PC-3 (cell line): ENCODE measurements at regions of chr5 and their contacts with region 1.

Region 1: GRCh38 chr5:149990518-149991376 is 9.7 kb downstream of the TIGD6 start:
- DNase-seq: peak; percentile 95
- ATAC-seq: peak; percentile 95
- H3K4me3 ChIP-seq: no peak overlapping the region
- H3K27ac ChIP-seq: no peak overlapping the region
- H3K4me1 ChIP-seq: no peaks in the 10 kb centered on the region
- H3K27me3 ChIP-seq: no peaks in the 10 kb centered on the region
- CTCF ChIP-seq: peak; percentile 98

Region 2: GRCh38 chr5:149636851-149637246 is 353.9 kb before region 1 on chr5:
- CTCF ChIA-PET with region 1: no interaction called
- POLR2A ChIA-PET with region 1: no interaction called
- intact Hi-C with region 1: loop called (anchors 5 kb)
- DNase-seq: peak; percentile 98
- ATAC-seq: peak; percentile 85
- H3K4me3 ChIP-seq: no peak overlapping the region
- H3K27ac ChIP-seq: no peak overlapping the region
- H3K4me1 ChIP-seq: peaks cover 26% of the 10 kb centered on the region
- H3K27me3 ChIP-seq: no peaks in the 10 kb centered on the region
- CTCF ChIP-seq: peak; percentile 100

Region 3: GRCh38 chr5:149765932-149766331 is 224.8 kb before region 1 on chr5:
- CTCF ChIA-PET with region 1: no interaction called
- POLR2A ChIA-PET with region 1: no interaction called
- intact Hi-C with region 1: no loop called
- DNase-seq: peak; percentile 67
- ATAC-seq: no peak
- H3K4me3 ChIP-seq: no peak overlapping the region
- H3K27ac ChIP-seq: no peak overlapping the region
- H3K4me1 ChIP-seq: no peaks in the 10 kb centered on the region
- H3K27me3 ChIP-seq: no peaks in the 10 kb centered on the region
- CTCF ChIP-seq: peak; percentile 89

Region 4: GRCh38 chr5:149852641-149853330 is 138.0 kb before region 1 on chr5:
- CTCF ChIA-PET with region 1: interaction called, 10 read pairs
- POLR2A ChIA-PET with region 1: no interaction called
- intact Hi-C with region 1: loop called (anchors 1 kb)
- DNase-seq: peak; percentile 87
- ATAC-seq: peak; percentile 93
- H3K4me3 ChIP-seq: no peak overlapping the region
- H3K27ac ChIP-seq: no peak overlapping the region
- H3K4me1 ChIP-seq: peaks cover 7% of the 10 kb centered on the region; the same call in 1 of the 2 replicates
- H3K27me3 ChIP-seq: no peaks in the 10 kb centered on the region
- CTCF ChIP-seq: peak; percentile 99

Region 5: DNA sequence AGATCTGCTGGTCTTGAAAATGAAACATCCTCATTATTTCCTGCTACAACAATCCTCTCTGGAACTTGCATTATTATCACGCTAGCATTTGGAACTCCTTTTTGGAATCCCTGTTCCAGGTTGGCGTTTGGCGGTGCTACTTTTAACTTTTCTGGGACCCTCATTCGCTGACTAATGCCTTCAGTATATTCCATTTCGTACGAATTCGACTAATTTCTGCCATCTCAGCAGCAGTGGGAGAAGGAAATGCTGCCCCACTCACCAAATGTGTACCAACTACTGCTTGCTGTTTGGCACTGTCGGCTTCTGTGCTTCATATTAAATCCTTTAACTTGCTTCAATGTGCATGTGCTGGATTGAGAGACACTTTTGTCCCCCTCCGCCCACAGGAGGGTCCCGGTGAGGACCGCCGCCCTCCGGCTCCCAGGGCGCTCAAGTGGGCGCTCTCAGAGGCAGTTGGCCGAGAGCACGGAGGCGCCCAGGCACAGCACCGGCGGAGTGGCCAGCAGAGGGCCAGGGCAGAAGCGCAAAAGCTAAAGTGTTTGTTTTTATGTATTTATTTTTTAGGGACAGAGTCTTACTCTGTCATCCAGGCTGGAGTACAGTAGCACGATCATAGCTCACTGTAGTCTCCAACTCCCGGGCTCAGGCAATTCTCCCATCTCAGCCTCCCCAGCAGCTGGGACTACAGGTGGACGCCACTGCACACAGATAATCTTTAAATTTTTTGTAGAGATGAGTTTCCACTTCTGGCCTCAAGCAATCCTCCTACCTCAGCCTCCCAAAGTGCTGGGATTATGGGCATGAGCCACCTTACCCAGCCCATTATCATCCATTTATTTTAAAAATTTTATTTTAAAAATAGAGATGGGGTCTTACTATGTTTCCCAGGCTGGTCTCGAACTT is 58.0 kb before region 1 on chr5:
- CTCF ChIA-PET with region 1: interaction called, 4 read pairs
- POLR2A ChIA-PET with region 1: no interaction called
- intact Hi-C with region 1: loop called (anchors 1 kb)
- DNase-seq: peak; percentile 80
- ATAC-seq: peak; percentile 84
- H3K4me3 ChIP-seq: peak overlapping the region; percentile 71
- H3K27ac ChIP-seq: no peak overlapping the region
- H3K4me1 ChIP-seq: peaks cover 33% of the 10 kb centered on the region
- H3K27me3 ChIP-seq: no peaks in the 10 kb centered on the region
- CTCF ChIP-seq: peak; percentile 93